Heart left ventricle (tissue), 16 donors: ENCODE measurements at regions of chr3 and their contacts with region 1.

Region 1: DNA sequence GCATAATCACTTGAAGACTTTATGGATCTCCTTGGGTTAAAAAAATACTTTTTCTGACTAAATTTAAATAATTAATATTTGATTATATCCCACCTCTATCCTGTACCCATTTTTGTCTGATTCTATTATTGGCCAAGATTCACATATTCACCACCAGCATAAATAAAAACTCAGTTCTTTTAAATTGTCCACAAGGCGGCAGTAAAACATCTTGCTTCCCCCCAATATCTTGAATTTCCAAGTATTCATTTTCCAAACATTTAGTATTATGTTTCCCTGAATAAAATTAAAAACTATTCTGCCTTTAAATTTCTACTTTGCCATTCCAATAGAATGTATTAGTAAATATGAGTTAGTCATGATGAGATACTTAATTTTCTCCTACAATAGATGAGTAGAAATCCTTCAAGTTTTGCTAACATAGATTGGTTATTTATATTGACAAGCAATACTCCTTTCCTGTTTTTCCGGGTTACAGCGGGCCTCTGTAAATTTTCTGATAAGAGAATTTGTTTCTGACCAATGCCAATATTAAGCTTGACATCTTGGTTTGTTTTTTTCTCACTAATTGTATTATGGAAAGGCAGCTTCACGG is 218.7 kb upstream of the MDFIC2 start:
- DNase-seq: no peak
- ATAC-seq: no peak
- H3K4me3 ChIP-seq: no peak overlapping the region
- H3K27ac ChIP-seq: no peak overlapping the region
- H3K4me1 ChIP-seq: no peaks in the 10 kb centered on the region
- H3K27me3 ChIP-seq: peaks cover 0 to 5% (median 0%) of the 10 kb centered on the region in 9 donors
- CTCF ChIP-seq: peak in 11 of 12 donors; percentile 26 to 71 (median 52)
- POLR2A ChIP-seq: no peak

Region 2: DNA sequence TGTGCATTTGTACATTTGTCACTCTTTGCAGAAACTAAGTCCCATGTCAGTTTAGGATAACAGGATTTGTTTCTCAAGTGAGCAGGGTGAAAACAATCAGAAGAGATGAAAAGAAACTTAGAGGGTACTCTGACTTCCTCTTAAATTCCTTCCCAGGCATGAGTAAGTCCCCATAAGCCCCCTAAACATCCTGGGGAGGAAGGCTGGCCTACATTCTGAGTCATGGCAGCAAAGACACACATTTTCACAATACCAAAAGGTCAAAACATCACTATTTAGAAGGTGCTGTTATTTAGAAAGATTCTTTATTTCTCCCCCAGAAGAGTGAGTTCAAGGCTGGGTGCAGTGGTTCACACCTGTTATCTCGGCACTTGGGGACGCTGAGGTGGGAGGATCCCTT is 1059.9 kb after region 1 on chr3:
- intact Hi-C with region 1: loop called in 3 of 10 experiments (anchors 5 kb)
- DNase-seq: no peak
- ATAC-seq: no peak
- H3K4me3 ChIP-seq: no peak overlapping the region
- H3K27ac ChIP-seq: no peak overlapping the region
- H3K4me1 ChIP-seq: peaks cover 0 to 7% (median 4%) of the 10 kb centered on the region in 12 donors
- H3K27me3 ChIP-seq: no peaks in the 10 kb centered on the region
- CTCF ChIP-seq: no peak
- POLR2A ChIP-seq: no peak

Region 3: GRCh38 chr3:71641674-71642073 is 1110.5 kb after region 1 on chr3:
- intact Hi-C with region 1: loop called in 1 of 10 experiments (anchors 10 kb)
- DNase-seq: no peak
- ATAC-seq: no peak
- H3K4me3 ChIP-seq: no peak overlapping the region
- H3K27ac ChIP-seq: no peak overlapping the region
- H3K4me1 ChIP-seq: no peaks in the 10 kb centered on the region
- H3K27me3 ChIP-seq: no peaks in the 10 kb centered on the region
- CTCF ChIP-seq: no peak
- POLR2A ChIP-seq: no peak